ENCODE measurements at regions of chr19 and their contacts with region 1.

Region 1: GRCh38 chr19:50511068-50511822 is at the start of gene JOSD2:
- DNase-seq: peak; percentile 98 to 99
- H3K4me3 ChIP-seq: peak within 1 kb of the TSS; percentile 58
- H3K4me3 Mint-ChIP-seq: peak within 1 kb of the TSS; percentile 76
- H3K27ac Mint-ChIP-seq: peak within 1 kb of the TSS; percentile 89
- H3K4me1 ChIP-seq: peaks cover 4% of the 10 kb centered on the region; the same call in 1 of the 2 replicates
- H3K4me1 Mint-ChIP-seq: peaks cover 7% of the 10 kb centered on the region
- H3K27me3 ChIP-seq: no peaks in the 10 kb centered on the region
- H3K27me3 Mint-ChIP-seq: no peaks in the 10 kb centered on the region
- CTCF ChIP-seq: no peak
- total RNA-seq, gene JOSD2: 27.7 and 27.9 TPM in 2 replicates

Region 2: DNA sequence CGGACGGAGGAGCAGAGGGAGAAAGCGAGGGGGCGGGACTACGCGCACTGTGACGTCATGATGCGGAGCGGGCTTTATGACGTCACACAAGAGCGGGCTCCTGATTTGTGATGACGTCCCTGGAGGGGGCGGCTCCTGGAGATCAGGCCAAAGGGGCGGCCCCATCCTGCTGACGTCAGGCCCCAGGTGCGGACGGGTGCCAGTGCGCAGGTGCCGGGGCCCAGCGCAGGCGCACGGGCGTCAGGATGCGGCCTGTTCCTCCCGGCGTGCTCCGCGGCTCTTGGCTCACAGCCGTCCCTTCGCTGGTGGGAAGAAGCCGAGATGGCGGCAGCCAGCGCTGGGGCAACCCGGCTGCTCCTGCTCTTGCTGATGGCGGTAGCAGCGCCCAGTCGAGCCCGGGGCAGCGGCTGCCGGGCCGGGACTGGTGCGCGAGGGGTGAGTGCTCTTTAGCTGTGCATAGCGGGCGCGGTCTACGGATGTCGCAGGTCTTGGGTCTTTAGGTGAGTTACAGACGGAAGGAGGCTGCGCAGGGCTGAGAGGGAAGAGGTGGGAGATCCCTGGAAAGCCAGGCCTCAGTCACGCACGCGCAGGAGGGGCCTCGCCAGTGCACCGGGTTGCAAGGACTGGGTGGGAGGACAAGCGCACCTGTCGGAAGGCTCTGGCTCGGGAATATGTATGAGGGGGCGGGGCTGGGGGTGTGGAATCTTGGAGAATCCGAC is 34.9 kb before region 1 on chr19 and contains the starts of genes EMC10 and GARIN5A:
- CTCF ChIA-PET with region 1: interaction called, 6 read pairs
- POLR2A ChIA-PET with region 1: no interaction called
- intact Hi-C with region 1: loop called (anchors 1 kb)
- DNase-seq: peak; percentile 85 to 93
- H3K4me3 ChIP-seq: peak within 1 kb of the TSS; percentile 51
- H3K4me3 Mint-ChIP-seq: peak within 1 kb of the TSS; percentile 89
- H3K27ac Mint-ChIP-seq: peak within 1 kb of the TSS; percentile 54
- H3K4me1 ChIP-seq: no peaks in the 10 kb centered on the region
- H3K4me1 Mint-ChIP-seq: no peaks in the 10 kb centered on the region
- H3K27me3 ChIP-seq: no peaks in the 10 kb centered on the region
- H3K27me3 Mint-ChIP-seq: no peaks in the 10 kb centered on the region
- CTCF ChIP-seq: no peak
- total RNA-seq, gene EMC10: 42.9 and 46.3 TPM in 2 replicates
- total RNA-seq, gene GARIN5A: 1.4 and 1.5 TPM in 2 replicates